ENCODE measurements at regions of chr10 and their contacts with region 1.

Region 1: DNA sequence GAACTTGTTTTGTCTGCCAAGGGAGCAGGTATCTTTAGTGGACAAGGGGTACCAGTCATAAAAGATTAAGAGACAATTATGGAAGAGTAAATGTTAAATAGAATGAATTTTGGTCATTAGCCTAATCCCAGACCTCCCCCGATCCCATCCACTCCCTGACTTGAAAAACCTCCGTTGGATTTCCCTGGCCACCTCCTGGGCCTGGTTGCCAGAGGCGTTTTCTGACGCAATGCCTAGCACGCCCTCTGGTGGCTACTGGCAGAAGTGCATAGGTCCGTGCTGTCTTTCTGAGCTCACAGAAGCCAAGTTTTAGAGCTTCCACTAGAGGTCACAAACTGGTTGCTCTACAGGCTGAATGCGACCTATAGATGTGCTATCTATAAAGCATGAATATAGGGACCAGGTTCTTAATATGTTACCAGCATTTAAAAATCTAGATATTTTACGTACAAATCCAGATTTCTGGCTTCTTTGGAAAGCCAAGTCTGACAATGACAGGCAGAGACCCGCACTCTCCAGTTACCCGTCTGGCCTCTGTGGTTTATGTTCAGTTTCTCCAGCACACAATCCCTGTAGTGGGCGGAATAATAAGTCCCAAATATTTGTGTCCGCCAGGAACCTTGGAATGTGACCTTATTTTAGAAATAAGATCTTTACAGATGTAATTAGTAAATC is 39.8 kb downstream of the SPOCK2 start:
- DNase-seq: peak; percentile 94 to 97
- H3K4me3 ChIP-seq: no peak overlapping the region
- H3K4me3 Mint-ChIP-seq: no peak overlapping the region
- H3K27ac Mint-ChIP-seq: peak overlapping the region; percentile 82
- H3K4me1 ChIP-seq: peaks cover 24% of the 10 kb centered on the region
- H3K4me1 Mint-ChIP-seq: peaks cover 20% of the 10 kb centered on the region
- H3K27me3 ChIP-seq: no peaks in the 10 kb centered on the region
- H3K27me3 Mint-ChIP-seq: no peaks in the 10 kb centered on the region
- CTCF ChIP-seq: peak; percentile 99 to 100

Region 2: DNA sequence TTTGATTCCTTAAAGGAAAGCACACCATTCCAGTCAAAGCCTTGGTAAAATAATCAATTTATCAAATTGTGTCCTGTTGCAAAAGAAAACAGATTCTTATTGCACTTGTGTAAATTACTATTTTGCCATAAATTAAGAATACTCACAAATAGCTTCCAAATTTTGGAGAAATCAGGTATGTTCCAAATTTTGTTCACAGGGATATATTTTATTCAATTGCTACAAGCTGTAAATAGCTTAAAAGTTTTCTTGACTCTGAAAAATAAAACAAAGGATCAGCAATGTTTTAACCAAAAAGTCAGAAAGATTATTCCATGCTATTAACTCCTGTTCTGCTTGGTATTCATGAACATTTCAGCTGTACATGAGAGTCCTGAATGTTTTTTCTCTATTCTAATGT is 131.8 kb before region 1 on chr10:
- CTCF ChIA-PET with region 1: interaction called, 25 read pairs
- POLR2A ChIA-PET with region 1: no interaction called
- intact Hi-C with region 1: loop called (anchors 1 kb)
- DNase-seq: no peak
- H3K4me3 ChIP-seq: no peak overlapping the region
- H3K4me3 Mint-ChIP-seq: no peak overlapping the region
- H3K27ac Mint-ChIP-seq: no peak overlapping the region
- H3K4me1 ChIP-seq: peaks cover 6% of the 10 kb centered on the region; the same call in 1 of the 2 replicates
- H3K4me1 Mint-ChIP-seq: peaks cover 12% of the 10 kb centered on the region
- H3K27me3 ChIP-seq: no peaks in the 10 kb centered on the region
- H3K27me3 Mint-ChIP-seq: no peaks in the 10 kb centered on the region
- CTCF ChIP-seq: no peak

Region 3: DNA sequence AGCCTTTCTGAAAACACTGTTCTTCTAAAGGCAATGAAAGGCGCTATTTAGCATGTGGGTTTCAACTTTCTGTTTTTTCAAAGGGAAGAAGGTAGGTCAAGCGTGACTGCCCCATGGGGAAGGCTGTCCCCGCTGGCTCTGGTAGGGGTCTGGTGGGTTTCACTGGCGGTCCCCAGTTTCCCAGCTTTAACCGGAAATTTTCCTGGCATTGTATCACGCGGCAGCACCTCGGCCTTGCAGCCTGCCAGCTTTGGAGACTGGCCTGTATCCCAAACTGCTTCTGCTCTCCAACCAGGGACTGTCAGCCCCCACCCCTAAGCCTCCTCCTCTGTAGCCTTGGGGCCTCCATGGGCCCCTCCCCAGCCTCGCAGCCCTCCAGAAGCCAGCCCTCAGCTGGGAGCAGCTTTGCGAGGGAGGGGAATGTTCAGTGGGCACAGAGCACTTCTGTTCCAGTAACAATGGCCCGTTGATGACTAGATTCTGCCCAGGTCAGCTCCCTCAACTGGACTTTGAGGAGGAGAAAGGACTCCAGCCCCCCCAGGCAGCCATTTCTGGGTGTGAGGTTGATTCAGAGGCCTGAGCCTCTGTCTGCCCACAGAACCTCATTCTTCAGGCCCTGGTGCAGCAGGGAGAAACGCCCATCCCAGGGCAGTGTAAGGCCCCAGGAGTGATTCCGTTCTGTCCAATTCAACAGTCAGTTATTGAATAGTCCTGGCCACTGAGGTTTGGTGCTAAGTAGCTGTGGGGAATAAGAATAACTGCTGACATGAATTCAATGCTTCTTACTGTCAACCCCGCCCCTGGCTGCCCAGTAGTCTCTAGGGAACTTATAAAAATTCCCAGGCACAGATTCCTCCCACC is 67.3 kb before region 1 on chr10:
- CTCF ChIA-PET with region 1: interaction called, 11 read pairs
- POLR2A ChIA-PET with region 1: no interaction called
- intact Hi-C with region 1: loop called (anchors 5 kb)
- DNase-seq: no peak
- H3K4me3 ChIP-seq: no peak overlapping the region
- H3K4me3 Mint-ChIP-seq: no peak overlapping the region
- H3K27ac Mint-ChIP-seq: no peak overlapping the region
- H3K4me1 ChIP-seq: peaks cover 23% of the 10 kb centered on the region
- H3K4me1 Mint-ChIP-seq: peaks cover 33% of the 10 kb centered on the region
- H3K27me3 ChIP-seq: no peaks in the 10 kb centered on the region
- H3K27me3 Mint-ChIP-seq: no peaks in the 10 kb centered on the region
- CTCF ChIP-seq: no peak

Region 4: DNA sequence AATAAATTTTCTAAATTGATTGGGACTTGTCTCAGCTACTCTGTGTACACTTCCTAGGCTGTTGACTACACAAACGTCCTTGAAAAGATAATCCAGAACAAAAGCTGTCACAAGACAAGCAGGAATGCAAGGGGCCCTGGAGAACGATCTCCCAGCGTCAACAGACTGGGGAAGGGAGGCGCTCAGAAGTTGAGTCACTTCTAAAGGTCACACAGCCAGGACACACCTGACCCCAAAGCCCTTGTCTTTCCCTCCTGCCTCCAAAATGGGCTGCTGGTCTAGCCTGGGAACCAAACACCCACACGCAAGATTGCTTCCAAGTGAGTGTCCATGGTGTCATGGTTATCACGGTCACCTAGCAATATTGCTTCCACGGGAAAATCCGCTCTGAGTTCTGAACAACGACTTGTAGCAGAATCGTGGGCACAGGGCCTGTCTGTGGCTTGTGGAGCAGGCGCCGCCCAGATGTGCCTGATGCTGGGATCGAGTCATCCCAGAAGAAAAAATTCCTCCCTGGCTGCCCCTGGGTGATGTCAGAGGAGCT is 10.1 kb before region 1 on chr10:
- CTCF ChIA-PET with region 1: interaction called, 46 read pairs
- POLR2A ChIA-PET with region 1: no interaction called
- intact Hi-C with region 1: no loop called
- DNase-seq: peak; percentile 83 to 91
- H3K4me3 ChIP-seq: no peak overlapping the region
- H3K4me3 Mint-ChIP-seq: peak overlapping the region; percentile 33
- H3K27ac Mint-ChIP-seq: peak overlapping the region; percentile 91
- H3K4me1 ChIP-seq: peaks cover 61% of the 10 kb centered on the region
- H3K4me1 Mint-ChIP-seq: peaks cover 43% of the 10 kb centered on the region
- H3K27me3 ChIP-seq: no peaks in the 10 kb centered on the region
- H3K27me3 Mint-ChIP-seq: no peaks in the 10 kb centered on the region
- CTCF ChIP-seq: no peak

Region 5: DNA sequence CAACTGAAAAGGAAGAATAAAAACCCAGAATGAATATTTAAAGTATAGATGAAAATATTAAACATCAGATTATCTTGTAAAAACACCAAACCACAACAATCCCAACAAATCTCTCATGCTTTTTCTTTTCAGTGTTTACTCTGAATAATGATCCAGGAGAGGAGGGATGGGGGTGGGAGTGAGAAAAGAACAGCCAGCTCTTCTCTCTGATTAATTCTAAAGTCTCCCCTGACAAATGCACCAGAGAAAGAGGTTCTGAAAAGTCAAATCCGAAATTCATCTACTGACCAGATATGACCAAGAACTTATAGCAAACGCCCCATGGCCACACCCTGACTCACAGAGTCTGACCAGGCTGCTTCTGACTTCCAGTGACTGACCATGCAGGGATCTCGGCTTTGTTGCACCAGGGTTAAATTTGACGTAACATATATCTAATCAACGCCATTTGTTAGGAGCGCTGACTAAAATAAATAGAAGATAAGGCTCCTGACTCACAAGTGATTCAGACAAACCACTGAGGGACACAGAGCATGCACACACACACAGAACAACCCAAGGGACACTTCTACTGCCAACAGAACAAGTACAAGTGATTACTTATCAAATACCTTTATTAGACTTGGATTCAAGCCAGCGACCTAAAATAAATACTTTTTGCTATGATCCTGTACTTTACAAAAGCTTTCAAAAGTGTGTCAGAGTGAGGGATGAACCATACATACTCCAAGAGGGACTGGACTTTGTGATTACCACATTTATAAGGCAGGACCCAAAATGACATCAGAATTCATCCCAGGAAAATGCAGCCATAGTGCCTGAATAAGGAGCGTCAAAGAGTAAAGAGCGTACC is 49.1 kb after region 1 on chr10:
- CTCF ChIA-PET with region 1: interaction called, 11 read pairs
- POLR2A ChIA-PET with region 1: no interaction called
- intact Hi-C with region 1: loop called (anchors 5 kb)
- DNase-seq: peak; percentile 62 to 82
- H3K4me3 ChIP-seq: no peak overlapping the region
- H3K4me3 Mint-ChIP-seq: peak overlapping the region; percentile 14
- H3K27ac Mint-ChIP-seq: peak overlapping the region; percentile 65
- H3K4me1 ChIP-seq: peaks cover 49% of the 10 kb centered on the region
- H3K4me1 Mint-ChIP-seq: peaks cover 62% of the 10 kb centered on the region
- H3K27me3 ChIP-seq: no peaks in the 10 kb centered on the region
- H3K27me3 Mint-ChIP-seq: no peaks in the 10 kb centered on the region
- CTCF ChIP-seq: no peak

Region 6: DNA sequence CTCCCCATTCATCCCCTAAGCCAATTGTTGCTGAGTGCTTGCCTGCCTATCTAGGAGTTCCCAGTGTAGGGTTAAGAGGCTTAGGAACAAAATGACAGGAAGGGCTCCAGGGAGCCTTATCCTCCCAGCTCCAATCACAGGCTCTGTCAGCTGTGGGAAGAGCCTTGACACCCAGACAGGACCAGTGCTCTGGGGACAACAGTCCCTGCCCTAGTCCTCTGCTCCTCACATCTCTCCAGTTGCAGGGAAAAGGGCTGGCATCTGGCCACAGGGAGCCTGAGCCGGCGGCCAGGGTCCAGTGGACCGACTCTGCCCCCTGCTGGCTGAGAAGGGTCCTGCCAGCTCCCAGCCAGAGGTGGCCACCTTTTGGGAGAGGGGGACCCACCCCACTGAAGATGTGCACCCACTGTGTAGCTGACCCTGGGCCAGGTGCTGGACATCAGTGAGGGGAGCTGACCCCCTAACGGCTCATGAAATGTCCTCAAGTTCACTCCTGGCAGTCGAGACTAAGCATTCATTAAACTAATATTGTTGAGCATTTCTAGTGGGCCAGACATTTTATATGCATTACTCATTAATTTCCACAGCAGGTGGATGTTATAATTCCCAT is 288.5 kb after region 1 on chr10:
- CTCF ChIA-PET with region 1: interaction called, 4 read pairs
- POLR2A ChIA-PET with region 1: no interaction called
- intact Hi-C with region 1: loop called (anchors 1 kb)
- DNase-seq: peak in 1 of 2 experiments; percentile 84
- H3K4me3 ChIP-seq: no peak overlapping the region
- H3K4me3 Mint-ChIP-seq: no peak overlapping the region
- H3K27ac Mint-ChIP-seq: no peak overlapping the region
- H3K4me1 ChIP-seq: no peaks in the 10 kb centered on the region
- H3K4me1 Mint-ChIP-seq: no peaks in the 10 kb centered on the region
- H3K27me3 ChIP-seq: no peaks in the 10 kb centered on the region
- H3K27me3 Mint-ChIP-seq: no peaks in the 10 kb centered on the region
- CTCF ChIP-seq: peak; percentile 95 to 96

Region 7: DNA sequence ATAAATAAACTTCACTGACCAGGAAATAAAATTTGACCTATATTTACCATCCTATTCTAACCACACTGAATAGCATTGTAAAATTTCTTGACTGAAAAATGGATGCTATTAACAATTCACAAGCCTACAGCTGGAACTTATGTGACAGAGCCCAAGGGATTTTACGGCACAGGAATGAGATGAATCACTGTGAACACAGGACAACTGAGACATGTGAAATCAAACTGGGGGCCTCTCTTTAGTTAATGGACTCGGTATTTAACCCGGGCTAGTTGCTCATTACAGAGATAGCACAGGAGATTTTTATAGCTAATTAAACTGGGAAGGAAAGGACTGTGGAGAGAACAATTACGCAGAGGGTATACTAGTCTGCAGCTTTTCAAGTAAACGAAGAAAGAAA is 476.7 kb after region 1 on chr10:
- CTCF ChIA-PET with region 1: no interaction called
- POLR2A ChIA-PET with region 1: no interaction called
- intact Hi-C with region 1: no loop called
- DNase-seq: peak in 1 of 2 experiments; percentile 32
- H3K4me3 ChIP-seq: no peak overlapping the region
- H3K4me3 Mint-ChIP-seq: peak overlapping the region; percentile 15
- H3K27ac Mint-ChIP-seq: peak overlapping the region; percentile 6
- H3K4me1 ChIP-seq: peaks cover 20% of the 10 kb centered on the region
- H3K4me1 Mint-ChIP-seq: peaks cover 12% of the 10 kb centered on the region
- H3K27me3 ChIP-seq: no peaks in the 10 kb centered on the region
- H3K27me3 Mint-ChIP-seq: no peaks in the 10 kb centered on the region
- CTCF ChIP-seq: no peak

Measured in Caco-2 (cell line).